ENCODE measurements at regions of chr1 and their contacts with region 1.

Region 1: GRCh38 chr1:59699227-59699847 is 115.4 kb upstream of the HOOK1 start:
- DNase-seq: no peak
- H3K4me3 Mint-ChIP-seq: no peak overlapping the region
- H3K27ac Mint-ChIP-seq: no peak overlapping the region
- H3K4me1 Mint-ChIP-seq: peaks cover 33% of the 10 kb centered on the region
- H3K27me3 Mint-ChIP-seq: no peaks in the 10 kb centered on the region

Region 2: DNA sequence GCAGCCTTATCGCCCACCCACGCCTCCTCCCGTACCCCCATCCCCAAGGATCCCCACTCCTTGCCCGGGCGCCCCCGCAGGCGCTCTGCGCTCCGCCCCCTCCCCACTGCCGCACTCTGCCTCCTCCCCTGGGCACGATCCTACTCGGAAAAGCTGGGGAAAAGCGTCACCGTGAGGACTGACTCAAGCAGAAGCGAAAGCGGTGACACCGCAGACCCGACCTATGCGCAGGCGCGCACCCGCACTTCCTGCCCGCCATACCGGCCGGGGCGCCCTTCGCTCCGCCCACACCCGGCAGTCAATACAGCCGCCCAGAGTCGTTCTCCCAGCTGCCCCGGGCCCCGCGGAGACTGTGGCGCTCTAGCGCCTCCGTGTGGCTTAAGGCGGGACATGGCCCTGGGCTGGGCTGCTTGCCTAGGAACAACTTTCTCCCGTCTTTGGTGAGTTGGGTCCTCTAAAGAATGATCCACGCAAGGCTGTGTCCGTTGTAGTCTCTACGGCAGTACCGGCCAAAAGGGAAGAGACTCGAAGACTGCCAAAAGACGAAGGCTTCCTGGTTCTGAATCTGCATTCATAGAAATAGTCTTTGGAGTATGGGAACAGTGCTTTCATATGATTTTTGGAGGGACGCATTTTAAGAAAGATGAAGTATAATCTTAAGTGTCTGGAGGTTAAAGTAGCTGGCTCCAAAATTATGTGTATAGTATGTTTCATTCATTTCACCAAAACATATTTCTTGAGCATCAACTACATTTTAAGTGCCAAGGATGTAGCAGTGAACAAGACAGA is 1152.6 kb before region 1 on chr1 and contains the start of gene OMA1:
- intact Hi-C with region 1: loop called (anchors 1 kb)
- DNase-seq: peak; percentile 97
- H3K4me3 Mint-ChIP-seq: peak within 1 kb of the TSS; percentile 91
- H3K27ac Mint-ChIP-seq: peak within 1 kb of the TSS; percentile 95
- H3K4me1 Mint-ChIP-seq: peaks cover 19% of the 10 kb centered on the region
- H3K27me3 Mint-ChIP-seq: peaks cover 15% of the 10 kb centered on the region
- total RNA-seq, gene OMA1: 12.9 and 13.0 TPM in 2 replicates

Region 3: GRCh38 chr1:58739856-58740466 is 959.4 kb before region 1 on chr1:
- intact Hi-C with region 1: loop called (anchors 1 kb)
- DNase-seq: no peak
- H3K4me3 Mint-ChIP-seq: no peak overlapping the region
- H3K27ac Mint-ChIP-seq: no peak overlapping the region
- H3K4me1 Mint-ChIP-seq: peaks cover 18% of the 10 kb centered on the region
- H3K27me3 Mint-ChIP-seq: peaks cover 7% of the 10 kb centered on the region

Region 4: DNA sequence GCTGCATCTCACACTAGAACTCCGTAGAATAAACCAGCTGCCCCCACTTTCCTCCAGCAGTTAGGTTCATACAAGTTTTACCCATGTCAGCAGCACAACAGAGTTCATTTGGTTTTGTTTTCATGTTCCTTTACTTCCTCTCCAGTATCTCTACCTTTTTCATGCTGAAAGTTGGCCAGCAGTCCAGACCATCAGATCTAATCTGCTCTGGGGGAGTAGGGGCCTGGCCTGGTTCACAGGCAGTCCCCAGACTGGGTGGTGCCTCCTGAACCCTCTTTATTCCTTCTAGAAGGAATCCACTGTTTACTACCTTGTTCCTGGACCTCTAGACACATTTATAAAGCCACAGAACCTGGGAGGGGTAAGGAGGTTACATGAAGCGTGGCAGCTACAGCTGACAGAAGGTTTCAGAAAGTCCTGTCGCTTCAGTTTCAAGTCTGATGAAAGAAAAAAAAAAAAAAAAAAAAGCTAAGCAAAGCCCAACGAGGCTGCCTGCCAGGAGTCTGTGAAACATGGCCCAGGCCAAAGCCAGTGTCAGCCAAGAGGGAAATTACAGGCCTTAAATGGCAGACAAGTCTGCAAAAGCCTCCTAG is 730.9 kb before region 1 on chr1:
- intact Hi-C with region 1: loop called (anchors 10 kb)
- DNase-seq: peak; percentile 42
- H3K4me3 Mint-ChIP-seq: peak overlapping the region; percentile 77
- H3K27ac Mint-ChIP-seq: peak overlapping the region; percentile 98
- H3K4me1 Mint-ChIP-seq: peaks cover 76% of the 10 kb centered on the region
- H3K27me3 Mint-ChIP-seq: no peaks in the 10 kb centered on the region

Region 5: DNA sequence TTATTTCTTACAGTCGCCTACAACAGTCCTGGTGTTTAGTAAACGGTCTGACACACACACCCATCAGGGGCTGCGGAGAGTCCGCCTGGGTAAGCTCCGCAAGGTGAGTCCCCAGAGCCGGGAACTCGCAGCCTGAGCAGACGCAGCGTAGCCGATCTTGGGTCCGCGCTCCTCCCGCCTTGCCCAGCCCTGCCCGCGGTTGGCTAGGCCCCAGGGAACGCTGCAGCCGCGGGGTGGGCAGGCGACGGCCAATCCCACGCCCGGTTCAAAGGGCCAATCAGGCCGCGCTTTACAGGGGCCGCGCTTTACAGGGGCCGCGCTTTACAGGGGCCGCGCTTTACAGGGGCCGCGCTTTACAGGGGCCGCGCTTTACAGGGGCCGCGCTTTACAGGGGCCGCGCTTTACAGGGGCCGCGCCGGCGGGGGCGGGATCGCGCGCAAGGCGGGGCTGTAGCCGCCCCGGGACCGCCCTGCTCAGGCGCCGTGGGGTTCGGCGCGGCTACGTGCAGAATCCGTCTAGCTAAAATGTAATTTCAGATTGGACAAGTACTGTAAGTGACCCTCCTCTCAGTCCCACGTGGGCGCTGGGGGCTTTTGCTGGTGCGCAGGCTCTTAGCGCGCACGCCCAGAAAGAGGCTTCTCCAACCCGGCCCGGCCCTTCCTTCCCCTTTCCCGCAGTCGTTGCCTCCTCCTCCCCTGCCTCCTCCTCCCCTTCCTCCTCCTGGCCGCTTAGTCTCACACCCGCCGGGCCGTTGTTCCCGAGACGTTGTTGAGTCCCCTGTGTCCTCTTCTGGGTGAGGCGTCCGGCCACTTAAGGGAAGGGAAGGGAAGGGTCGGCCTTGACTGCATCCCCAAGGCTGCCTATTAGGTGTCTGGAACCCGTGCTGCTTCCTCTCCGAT is 402.7 kb before region 1 on chr1 and contains the start of gene FGGY:
- intact Hi-C with region 1: loop called (anchors 2 kb)
- DNase-seq: peak; percentile 86
- H3K4me3 Mint-ChIP-seq: peak within 1 kb of the TSS; percentile 91
- H3K27ac Mint-ChIP-seq: peak within 1 kb of the TSS; percentile 91
- H3K4me1 Mint-ChIP-seq: peaks cover 48% of the 10 kb centered on the region
- H3K27me3 Mint-ChIP-seq: no peaks in the 10 kb centered on the region
- total RNA-seq, gene FGGY: 7.1 and 8.2 TPM in 2 replicates

Region 6: DNA sequence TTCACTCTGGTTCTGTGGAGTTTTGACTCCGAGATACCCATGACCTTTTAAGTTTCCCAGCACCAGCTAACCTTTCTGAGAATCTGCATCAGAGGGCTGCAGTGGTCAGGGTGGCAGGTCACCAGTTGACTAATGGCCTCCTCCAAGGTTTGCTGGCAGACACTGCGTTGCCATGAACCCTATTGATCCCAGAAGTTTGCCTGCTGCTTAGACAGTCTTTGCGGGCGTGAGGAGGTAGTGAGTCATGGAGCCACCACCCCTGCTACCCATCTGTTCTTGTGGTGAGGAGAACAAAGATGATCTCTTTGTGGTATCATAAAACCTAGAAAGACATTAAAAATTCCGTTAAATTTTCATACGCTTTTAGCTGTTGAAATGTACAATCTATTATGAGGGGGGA is 222.1 kb before region 1 on chr1:
- intact Hi-C with region 1: loop called (anchors 1 kb)
- DNase-seq: peak; percentile 30
- H3K4me3 Mint-ChIP-seq: peak overlapping the region; percentile 15
- H3K27ac Mint-ChIP-seq: peak overlapping the region; percentile 84
- H3K4me1 Mint-ChIP-seq: peaks cover 9% of the 10 kb centered on the region
- H3K27me3 Mint-ChIP-seq: no peaks in the 10 kb centered on the region